ENCODE measurements at regions of chr14 and their contacts with region 1.

Region 1: DNA sequence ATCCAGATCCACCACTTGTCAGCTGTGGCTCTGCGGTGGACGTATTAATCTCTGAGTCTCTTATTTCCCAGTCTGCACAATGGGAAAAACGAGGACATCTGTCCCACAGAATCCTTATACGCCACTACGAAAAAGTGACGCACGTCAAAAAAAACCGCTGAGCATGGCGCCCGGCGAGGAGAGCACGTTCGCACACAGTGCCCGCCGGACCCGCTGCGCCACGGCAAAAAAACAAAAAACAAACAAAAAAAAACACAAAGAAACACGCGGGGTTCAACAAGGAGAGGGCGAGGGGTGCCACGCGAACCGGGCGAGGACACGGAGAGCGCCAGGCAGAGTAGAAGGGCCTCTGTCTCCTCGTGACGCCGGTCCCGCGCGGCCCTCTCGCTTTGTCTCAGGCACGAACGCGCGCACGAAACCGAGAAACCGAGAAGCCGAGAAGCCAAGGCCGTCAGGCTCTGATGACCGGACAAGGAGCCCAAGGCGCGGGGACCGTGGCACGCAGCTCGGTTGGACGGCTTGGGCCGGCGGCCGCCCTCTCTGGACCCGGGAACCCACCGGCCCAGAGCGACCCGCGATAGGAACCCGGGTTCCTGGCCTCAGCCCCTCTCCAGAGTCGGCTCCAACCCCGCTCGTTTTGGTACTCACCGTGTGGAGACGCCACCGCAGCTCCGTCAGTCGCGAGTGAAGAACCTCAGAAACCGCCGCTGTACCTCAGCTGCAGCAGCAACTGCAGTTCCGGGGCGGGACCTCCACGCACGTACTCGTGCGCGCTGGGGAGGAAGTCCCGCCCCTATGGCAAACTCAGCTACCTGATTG is at the start of gene DDX24:
- DNase-seq: peak; percentile 94 to 100 (median 98)

Region 2: GRCh38 chr14:94129111-94129757 is 48.6 kb after region 1 on chr14 and contains the start of gene IFI27L2:
- intact Hi-C with region 1: loop called (anchors 5 kb)
- DNase-seq: peak; percentile 57 to 94 (median 72)

Region 3: GRCh38 chr14:94161981-94162380 is 81.3 kb after region 1 on chr14:
- intact Hi-C with region 1: no loop called
- DNase-seq: no peak